Endothelial cell of umbilical vein (primary cell): ENCODE measurements at regions of chr1 and their contacts with region 1.

Region 1: GRCh38 chr1:196477262-196477661 is 131.0 kb downstream of the KCNT2 start:
- DNase-seq: no peak
- H3K4me3 ChIP-seq: no peak overlapping the region
- H3K27ac ChIP-seq: no peak overlapping the region
- H3K4me1 ChIP-seq: no peaks in the 10 kb centered on the region
- H3K27me3 ChIP-seq: no peaks in the 10 kb centered on the region
- CTCF ChIP-seq: no peak
- POLR2A ChIP-seq: no peak

Region 2: DNA sequence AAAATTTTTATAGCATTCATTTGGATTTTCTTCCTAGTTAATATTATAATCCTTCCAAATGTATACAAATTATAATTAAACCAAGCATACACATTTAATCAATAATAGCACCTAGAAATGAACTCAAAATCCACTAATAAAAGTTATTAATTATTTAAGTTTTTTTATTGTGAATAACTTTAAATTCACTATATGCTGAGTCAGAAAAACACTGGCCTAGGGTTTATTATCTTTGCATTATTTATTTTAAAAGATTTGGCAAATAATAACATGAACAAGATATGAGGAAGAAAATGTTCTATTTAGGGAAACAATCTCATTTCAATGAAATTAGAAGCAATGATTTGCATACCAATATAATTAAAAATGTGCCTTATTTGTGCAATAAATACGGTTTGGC is 820.5 kb before region 1 on chr1:
- CTCF ChIA-PET with region 1: no interaction called
- POLR2A ChIA-PET with region 1: no interaction called
- dilution Hi-C with region 1: no loop called
- intact Hi-C with region 1: no loop called
- DNase-seq: no peak
- H3K4me3 ChIP-seq: no peak overlapping the region
- H3K27ac ChIP-seq: no peak overlapping the region
- H3K4me1 ChIP-seq: no peaks in the 10 kb centered on the region
- H3K27me3 ChIP-seq: no peaks in the 10 kb centered on the region
- CTCF ChIP-seq: no peak
- POLR2A ChIP-seq: no peak

Region 3: DNA sequence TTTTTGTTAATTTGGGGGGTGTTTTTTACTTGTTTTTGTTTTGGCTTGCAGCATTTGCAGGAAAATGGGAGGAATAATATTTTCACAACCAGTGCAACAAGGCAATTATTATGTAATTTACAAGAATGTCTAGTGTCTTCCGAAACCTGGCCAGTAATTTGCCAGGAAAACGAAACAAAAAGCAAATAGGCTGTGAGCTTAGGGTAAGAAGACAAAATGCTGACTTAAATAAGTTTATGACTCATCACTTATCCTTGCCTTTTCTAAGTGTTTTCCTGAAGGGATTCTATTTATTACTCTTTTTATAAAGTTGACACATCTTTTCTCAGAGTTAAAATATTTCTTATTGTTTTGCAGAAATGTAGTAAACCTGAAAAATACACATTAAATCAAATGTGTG is 81.2 kb after region 1 on chr1:
- CTCF ChIA-PET with region 1: no interaction called
- POLR2A ChIA-PET with region 1: interaction called, 11 read pairs
- dilution Hi-C with region 1: no loop called
- intact Hi-C with region 1: no loop called
- DNase-seq: peak; percentile 71
- H3K4me3 ChIP-seq: peak overlapping the region in 2 of 3 experiments; percentile 83
- H3K27ac ChIP-seq: peak overlapping the region; percentile 29
- H3K4me1 ChIP-seq: no peaks in the 10 kb centered on the region
- H3K27me3 ChIP-seq: no peaks in the 10 kb centered on the region
- CTCF ChIP-seq: no peak
- POLR2A ChIP-seq: no peak